ENCODE measurements at regions of chr16 and their contacts with region 1.

Region 1: GRCh38 chr16:67667817-67668494 is 1.3 kb downstream of the C16orf86 start:
- DNase-seq: peak; percentile 59
- H3K4me3 ChIP-seq: no peak overlapping the region
- H3K27me3 ChIP-seq: no peaks in the 10 kb centered on the region
- CTCF ChIP-seq: peak; percentile 96

Region 2: GRCh38 chr16:67499106-67499505 is 168.8 kb before region 1 on chr16:
- CTCF ChIA-PET with region 1: interaction called, 22 read pairs
- POLR2A ChIA-PET with region 1: no interaction called
- DNase-seq: no peak
- H3K4me3 ChIP-seq: no peak overlapping the region
- H3K27me3 ChIP-seq: no peaks in the 10 kb centered on the region
- CTCF ChIP-seq: no peak

Region 3: DNA sequence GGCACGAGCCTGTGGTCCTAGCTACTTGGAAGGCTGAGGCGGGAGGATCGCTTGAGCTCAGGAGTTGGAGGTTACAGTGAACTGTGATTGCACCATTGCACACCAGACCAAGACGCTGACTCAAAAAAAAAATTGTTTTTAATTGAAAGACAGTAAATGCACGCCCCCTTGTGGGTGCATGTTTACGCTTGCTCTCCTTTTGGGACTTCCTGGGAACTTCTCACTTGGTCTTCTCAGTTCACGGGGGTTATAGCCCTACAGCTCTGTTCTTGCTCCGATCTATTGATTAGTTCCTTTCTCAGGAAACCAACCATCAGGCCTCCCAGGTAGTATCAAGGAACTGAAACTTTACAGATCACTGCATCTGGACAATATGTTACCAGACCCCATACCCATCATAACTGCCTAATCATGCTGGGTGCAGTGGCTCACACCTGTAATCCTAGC is 153.6 kb before region 1 on chr16:
- CTCF ChIA-PET with region 1: interaction called, 208 read pairs
- POLR2A ChIA-PET with region 1: no interaction called
- DNase-seq: peak; percentile 24
- H3K4me3 ChIP-seq: no peak overlapping the region
- H3K27me3 ChIP-seq: no peaks in the 10 kb centered on the region
- CTCF ChIP-seq: peak; percentile 72

Region 4: DNA sequence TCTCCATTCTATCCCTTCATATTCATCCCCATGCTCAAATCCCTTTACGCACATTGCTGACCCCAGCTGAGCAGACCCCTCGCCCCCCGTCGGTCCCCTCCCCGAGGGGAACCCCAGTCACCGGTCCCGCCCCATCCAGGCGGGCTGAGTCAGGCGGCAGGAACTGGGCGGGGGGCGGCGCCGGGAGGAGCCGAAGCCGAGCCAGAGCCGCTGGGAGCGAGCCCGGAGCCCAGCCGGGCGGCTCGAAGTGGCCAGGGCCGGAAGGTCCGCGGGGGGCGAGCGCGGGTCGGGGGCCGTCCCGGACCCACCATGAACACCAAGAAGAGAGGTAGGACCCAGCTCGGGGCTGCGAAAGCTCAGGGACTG is 130.7 kb before region 1 on chr16:
- CTCF ChIA-PET with region 1: interaction called, 10 read pairs
- POLR2A ChIA-PET with region 1: interaction called, 4 read pairs
- DNase-seq: no peak
- H3K4me3 ChIP-seq: peak overlapping the region; percentile 81
- H3K27me3 ChIP-seq: no peaks in the 10 kb centered on the region
- CTCF ChIP-seq: no peak

Region 5: DNA sequence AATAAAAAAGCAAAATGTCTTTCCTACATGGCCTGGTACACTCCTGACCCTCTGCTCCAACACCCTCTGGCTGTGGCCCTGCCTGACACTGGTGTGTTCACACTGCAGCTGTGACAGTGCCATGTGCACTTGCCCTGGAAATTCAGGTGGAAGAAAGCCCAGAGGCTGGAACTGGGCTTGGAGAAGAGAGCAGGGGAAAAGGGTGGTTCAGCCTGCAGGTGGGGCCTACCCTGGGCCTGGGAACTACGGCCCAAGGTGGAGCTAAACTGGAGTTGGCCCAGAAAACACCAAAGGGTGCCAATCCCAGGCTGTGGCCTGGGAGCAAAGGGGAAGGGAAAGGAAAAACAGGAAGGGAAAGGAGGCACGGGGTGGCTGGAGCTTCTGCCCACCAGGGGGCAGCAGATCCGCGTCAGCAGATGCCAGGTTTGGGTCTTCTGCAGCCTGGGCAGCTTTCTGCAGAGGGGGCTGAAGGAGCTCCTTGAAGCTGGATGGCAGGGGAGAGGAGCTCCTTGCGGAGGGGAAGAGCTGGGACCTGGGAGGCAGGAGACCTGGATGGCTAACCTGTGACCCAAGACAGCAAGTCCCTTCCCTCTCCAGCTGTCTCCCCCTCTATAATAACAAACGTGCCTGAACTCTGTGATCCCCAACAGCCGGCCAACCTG is 121.1 kb before region 1 on chr16:
- CTCF ChIA-PET with region 1: interaction called, 43 read pairs
- POLR2A ChIA-PET with region 1: no interaction called
- DNase-seq: no peak
- H3K4me3 ChIP-seq: no peak overlapping the region
- H3K27me3 ChIP-seq: no peaks in the 10 kb centered on the region
- CTCF ChIP-seq: peak; percentile 95

Region 6: DNA sequence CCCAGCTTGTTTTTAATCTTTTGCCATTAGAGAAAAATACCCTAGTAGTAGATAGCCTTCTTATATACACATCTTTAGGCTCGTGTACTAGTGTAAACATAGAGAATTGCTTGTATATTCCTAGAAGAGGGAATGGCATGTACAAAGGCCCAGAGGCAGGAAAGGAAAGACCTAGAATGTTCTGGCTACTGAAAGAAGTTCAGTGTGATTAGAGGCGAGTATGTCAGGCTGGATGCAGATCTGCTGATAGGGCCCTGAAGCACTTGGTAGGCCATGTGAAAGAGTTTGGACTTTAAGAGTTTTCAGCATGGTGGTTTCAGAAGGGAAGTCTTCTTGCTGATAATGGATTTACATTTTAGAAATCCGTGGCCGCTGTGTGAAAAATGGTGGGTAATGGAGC is 88.3 kb before region 1 on chr16:
- CTCF ChIA-PET with region 1: no interaction called
- POLR2A ChIA-PET with region 1: no interaction called
- DNase-seq: no peak
- H3K4me3 ChIP-seq: no peak overlapping the region
- H3K27me3 ChIP-seq: no peaks in the 10 kb centered on the region
- CTCF ChIP-seq: no peak

Region 7: DNA sequence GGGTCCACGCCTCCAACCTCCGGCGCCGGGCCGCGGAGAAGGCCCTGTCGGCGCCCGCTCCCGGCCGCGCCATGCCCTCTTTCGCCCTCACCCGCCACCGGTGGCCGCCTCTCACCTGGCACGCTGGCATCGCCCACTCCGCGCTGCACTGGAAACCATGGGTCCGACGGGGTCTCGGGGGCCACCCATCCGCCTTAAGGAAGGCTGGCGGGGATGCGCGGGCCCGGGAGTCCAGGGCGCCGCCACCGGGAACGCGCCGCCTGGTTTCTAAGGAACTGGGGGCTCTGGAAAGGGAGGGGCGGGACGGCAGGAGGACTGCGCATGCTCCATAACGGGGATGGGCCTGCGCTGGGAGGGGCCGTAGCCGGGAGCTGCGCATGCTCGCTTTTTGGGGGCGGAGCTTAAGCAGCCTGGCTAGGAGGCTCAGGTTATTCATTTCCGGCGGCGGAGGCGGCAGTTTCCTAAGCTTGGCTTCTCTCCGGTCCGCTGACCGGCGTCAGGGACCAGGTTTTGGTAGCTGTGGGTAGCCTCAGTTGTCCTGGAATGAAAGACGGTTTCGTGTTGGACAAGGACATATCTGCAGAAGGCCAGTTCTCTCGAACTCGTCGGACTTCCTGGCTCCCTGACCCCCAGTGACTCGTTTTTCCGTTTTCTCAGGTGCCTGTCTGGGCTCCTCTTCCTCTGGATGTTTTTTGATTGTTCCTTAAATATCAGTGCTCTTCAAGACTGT is 51.3 kb after region 1 on chr16 and contains the start of gene GFOD2:
- CTCF ChIA-PET with region 1: interaction called, 10 read pairs
- POLR2A ChIA-PET with region 1: no interaction called
- DNase-seq: peak; percentile 63
- H3K4me3 ChIP-seq: peak within 1 kb of the TSS; percentile 95
- H3K27me3 ChIP-seq: no peaks in the 10 kb centered on the region
- CTCF ChIP-seq: no peak
- polyA plus RNA-seq, gene GFOD2: 11.4 and 13.6 TPM in 2 replicates

Region 8: DNA sequence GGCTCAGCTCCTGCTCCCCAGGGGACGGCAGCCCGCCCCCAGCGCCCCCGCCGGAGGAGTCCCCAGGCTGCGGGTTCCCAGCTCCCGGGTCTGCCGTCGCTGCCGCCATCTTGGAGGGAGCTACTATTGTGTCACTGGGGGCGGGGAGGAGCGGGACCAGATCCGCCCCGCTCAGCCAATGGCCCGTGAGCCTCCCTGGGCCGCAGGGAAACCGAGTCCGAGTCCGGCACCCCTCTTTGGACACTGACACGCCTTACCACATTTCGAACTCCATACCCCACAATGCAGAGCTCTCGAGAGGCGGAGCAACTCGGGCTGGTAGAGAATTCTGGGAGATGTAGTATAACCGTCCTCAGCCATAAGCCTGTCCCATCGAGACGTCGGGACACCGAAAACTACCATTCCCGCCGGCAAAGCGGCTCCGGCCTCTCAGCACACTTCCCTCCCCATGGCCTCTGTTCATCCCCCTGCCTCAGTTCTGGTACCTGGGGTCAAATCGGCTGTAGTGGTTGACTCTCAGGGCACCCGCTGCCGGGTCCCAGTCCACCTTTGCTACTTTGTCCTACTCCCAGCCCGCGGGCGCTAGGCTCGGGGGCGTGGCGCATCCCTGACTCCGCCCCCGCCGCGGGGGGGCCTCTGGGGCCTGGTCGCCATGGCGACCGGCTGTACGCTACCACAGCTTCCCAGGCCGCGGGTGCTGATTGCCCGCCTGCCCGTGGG is 138.6 kb after region 1 on chr16 and contains the starts of genes RANBP10 and TSNAXIP1:
- CTCF ChIA-PET with region 1: interaction called, 11 read pairs
- POLR2A ChIA-PET with region 1: no interaction called
- DNase-seq: peak; percentile 99
- H3K4me3 ChIP-seq: peak within 1 kb of the TSS; percentile 84
- H3K27me3 ChIP-seq: no peaks in the 10 kb centered on the region
- CTCF ChIP-seq: no peak
- polyA plus RNA-seq, gene RANBP10: 11.5 and 17.6 TPM in 2 replicates
- polyA plus RNA-seq, gene TSNAXIP1: 0.96 and 1.6 TPM in 2 replicates